Vagina (tissue), 2 donors: ENCODE measurements at regions of chr5 and their contacts with region 1.

Region 1: GRCh38 chr5:141524604-141525597 is 36.0 kb downstream of the PCDHGC5 start:
- DNase-seq: peak in 1 of 2 donors; percentile 96
- H3K4me3 ChIP-seq: no peak overlapping the region
- H3K27ac ChIP-seq: peak overlapping the region; percentile 80
- H3K4me1 ChIP-seq: peaks cover 72% of the 10 kb centered on the region
- H3K27me3 ChIP-seq: no peaks in the 10 kb centered on the region
- CTCF ChIP-seq: peak; percentile 93 to 99 (median 96)
- POLR2A ChIP-seq: no peak

Region 2: GRCh38 chr5:141412854-141413539 is 111.9 kb before region 1 on chr5 and contains the start of gene PCDHGA10:
- intact Hi-C with region 1: loop called (anchors 10 kb)
- DNase-seq: no peak
- H3K4me3 ChIP-seq: peak within 1 kb of the TSS; percentile 10 to 26
- H3K27ac ChIP-seq: no peak within 1 kb of the TSS
- H3K4me1 ChIP-seq: no peaks in the 10 kb centered on the region
- H3K27me3 ChIP-seq: no peaks in the 10 kb centered on the region
- CTCF ChIP-seq: peak in 1 of 3 experiments; percentile 19
- POLR2A ChIP-seq: no peak
- total RNA-seq, gene PCDHGA10: 10.6 TPM

Region 3: GRCh38 chr5:141475625-141476131 is 49.2 kb before region 1 on chr5 and contains the start of gene PCDHGC3:
- intact Hi-C with region 1: loop called (anchors 2 kb)
- DNase-seq: peak in 1 of 2 donors; percentile 97
- H3K4me3 ChIP-seq: peak within 1 kb of the TSS; percentile 71 to 76
- H3K27ac ChIP-seq: peak within 1 kb of the TSS; percentile 96
- H3K4me1 ChIP-seq: peaks cover 41% of the 10 kb centered on the region
- H3K27me3 ChIP-seq: no peaks in the 10 kb centered on the region
- CTCF ChIP-seq: peak; percentile 26 to 65 (median 37)
- POLR2A ChIP-seq: peak in 1 of 2 donors; percentile 73
- total RNA-seq, gene PCDHGC3: 78.3 TPM